Ascending aorta (tissue), 2 donors: ENCODE measurements at regions of chr12 and their contacts with region 1.

Region 1: GRCh38 chr12:95739561-95740313 is 50.8 kb downstream of the NTN4 start:
- DNase-seq: no peak
- H3K4me3 ChIP-seq: no peak overlapping the region
- H3K27ac ChIP-seq: peak overlapping the region; percentile 6 to 27
- H3K4me1 ChIP-seq: peaks cover 0 to 8% of the 10 kb centered on the region in 2 donors
- H3K27me3 ChIP-seq: no peaks in the 10 kb centered on the region
- CTCF ChIP-seq: no peak

Region 2: GRCh38 chr12:95700316-95700785 is 39.4 kb before region 1 on chr12:
- intact Hi-C with region 1: loop called (anchors 5 kb)
- DNase-seq: peak; percentile 13 to 85
- H3K4me3 ChIP-seq: peak overlapping the region in 1 of 2 donors; percentile 26
- H3K27ac ChIP-seq: peak overlapping the region; percentile 70 to 77
- H3K4me1 ChIP-seq: peaks cover 7 to 19% of the 10 kb centered on the region in 2 donors
- H3K27me3 ChIP-seq: no peaks in the 10 kb centered on the region
- CTCF ChIP-seq: no peak

Region 3: GRCh38 chr12:95755261-95755865 is 15.6 kb after region 1 on chr12:
- intact Hi-C with region 1: no loop called
- DNase-seq: no peak
- H3K4me3 ChIP-seq: no peak overlapping the region
- H3K27ac ChIP-seq: no peak overlapping the region
- H3K4me1 ChIP-seq: peaks cover 0 to 3% of the 10 kb centered on the region in 2 donors
- H3K27me3 ChIP-seq: no peaks in the 10 kb centered on the region
- CTCF ChIP-seq: no peak

Region 4: DNA sequence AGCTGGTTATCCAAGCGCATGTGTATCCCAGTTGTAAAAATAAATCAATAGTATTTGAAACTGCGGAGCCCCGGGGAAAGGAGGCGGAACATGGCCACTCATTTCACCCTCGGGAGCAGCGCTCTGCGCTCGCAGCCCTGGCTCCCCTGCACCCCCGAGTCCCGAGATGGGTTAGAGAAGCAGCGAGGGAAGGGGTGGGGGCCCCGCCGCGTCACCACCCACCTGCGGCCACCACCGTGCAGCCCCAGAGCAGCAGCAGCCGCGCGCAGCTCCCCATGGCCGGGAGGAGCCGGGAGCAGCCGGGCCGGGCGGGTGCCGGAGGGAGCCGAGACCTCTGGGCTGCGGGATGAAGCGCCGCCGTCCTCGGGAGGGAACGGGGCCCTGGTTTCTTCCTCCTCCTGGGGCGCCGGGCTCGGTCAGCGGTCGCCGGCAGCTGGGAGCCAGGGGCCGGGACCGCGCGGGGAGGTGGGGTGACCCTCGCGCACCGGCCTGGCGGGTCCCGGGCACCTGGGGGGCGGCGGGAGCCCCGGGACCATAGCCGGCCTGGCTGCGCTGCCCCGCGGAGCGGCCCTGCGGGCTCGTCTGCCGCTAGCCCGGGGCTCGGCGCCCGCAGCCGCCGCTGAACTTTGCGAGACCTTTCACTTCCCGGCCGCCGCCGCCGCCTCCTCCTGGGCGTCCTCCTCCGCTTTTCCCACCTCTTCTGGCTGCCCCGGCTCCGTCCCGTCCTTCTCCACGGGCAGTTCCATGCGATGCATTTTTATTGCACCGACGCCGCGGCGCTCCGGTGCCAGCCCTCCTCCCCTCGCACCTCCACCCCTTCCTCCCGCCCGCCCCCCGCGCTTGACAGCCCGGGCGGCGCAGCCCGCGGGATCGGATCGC is 50.5 kb after region 1 on chr12 and contains the start of gene NTN4:
- intact Hi-C with region 1: loop called (anchors 5 kb)
- DNase-seq: peak in 1 of 2 donors; percentile 78
- H3K4me3 ChIP-seq: peak within 1 kb of the TSS; percentile 89 to 96
- H3K27ac ChIP-seq: peak within 1 kb of the TSS; percentile 91 to 94
- H3K4me1 ChIP-seq: peaks cover 0 to 4% of the 10 kb centered on the region in 2 donors
- H3K27me3 ChIP-seq: no peaks in the 10 kb centered on the region
- CTCF ChIP-seq: no peak
- total RNA-seq, gene NTN4: 63.9 TPM